Activated T-helper 2 cell treated with anti-CD3 and anti-CD28 coated beads, Interferon-gamma antibody, Interleukin-2, Interleukin-4, amounts not matched to agents 10 μg/mL and 5 μg/mL and 100 μg/mL, durations not matched to agents 14 hours and 24 hours and 36 hours (primary cell): ENCODE measurements at regions of chr10 and their contacts with region 1.

Region 1: GRCh38 chr10:102399217-102400089 is 3.9 kb downstream of the NFKB2 start:
- DNase-seq: peak; percentile 87
- H3K4me3 Mint-ChIP-seq: peak overlapping the region; percentile 91
- H3K27ac Mint-ChIP-seq: peak overlapping the region; percentile 69
- H3K4me1 Mint-ChIP-seq: peaks cover 23% of the 10 kb centered on the region
- H3K27me3 Mint-ChIP-seq: no peaks in the 10 kb centered on the region

Region 2: DNA sequence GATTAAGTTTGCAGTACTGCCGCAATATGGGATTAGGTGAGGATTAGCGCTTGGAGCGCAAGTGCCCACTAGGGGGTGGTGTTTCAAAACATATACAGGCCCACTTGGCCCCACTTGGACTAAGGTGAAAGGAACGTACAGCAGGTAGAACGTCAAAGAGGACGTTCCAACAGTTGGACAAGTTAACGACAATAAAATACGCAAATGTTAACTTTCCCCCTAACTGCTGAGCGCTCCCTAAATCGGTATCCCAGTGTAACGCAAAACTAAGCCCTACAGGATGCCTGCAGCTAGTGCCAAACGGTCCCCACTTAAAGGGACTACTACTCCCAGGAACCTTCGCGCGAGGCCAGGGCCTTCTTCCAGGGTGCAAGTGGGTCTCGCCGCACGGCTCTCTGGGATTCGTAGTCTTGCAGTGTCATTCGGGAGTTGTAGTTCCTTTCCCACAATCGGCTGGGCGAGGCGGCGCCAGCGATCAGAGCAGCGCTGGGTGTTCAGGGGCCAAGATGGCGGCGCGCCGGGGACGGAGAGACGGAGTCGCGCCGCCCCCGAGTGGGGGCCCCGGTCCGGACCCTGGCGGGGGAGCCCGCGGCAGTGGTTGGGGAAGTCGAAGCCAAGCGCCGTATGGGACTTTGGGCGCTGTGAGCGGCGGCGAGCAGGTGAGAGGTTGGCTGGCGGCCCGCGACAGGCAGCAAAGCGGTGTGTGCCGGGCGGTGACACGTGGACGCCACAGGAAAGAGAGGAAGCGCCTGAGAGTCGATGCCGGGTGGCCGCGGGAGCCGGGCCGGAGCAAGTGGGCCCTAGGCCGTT is 266.7 kb before region 1 on chr10 and contains the start of gene PPRC1:
- intact Hi-C with region 1: loop called (anchors 5 kb)
- DNase-seq: peak; percentile 98
- H3K4me3 Mint-ChIP-seq: peak within 1 kb of the TSS; percentile 95
- H3K27ac Mint-ChIP-seq: peak within 1 kb of the TSS; percentile 98
- H3K4me1 Mint-ChIP-seq: peaks cover 26% of the 10 kb centered on the region
- H3K27me3 Mint-ChIP-seq: no peaks in the 10 kb centered on the region
- total RNA-seq, gene PPRC1: 91.3 and 94.1 TPM in 2 replicates

Region 3: DNA sequence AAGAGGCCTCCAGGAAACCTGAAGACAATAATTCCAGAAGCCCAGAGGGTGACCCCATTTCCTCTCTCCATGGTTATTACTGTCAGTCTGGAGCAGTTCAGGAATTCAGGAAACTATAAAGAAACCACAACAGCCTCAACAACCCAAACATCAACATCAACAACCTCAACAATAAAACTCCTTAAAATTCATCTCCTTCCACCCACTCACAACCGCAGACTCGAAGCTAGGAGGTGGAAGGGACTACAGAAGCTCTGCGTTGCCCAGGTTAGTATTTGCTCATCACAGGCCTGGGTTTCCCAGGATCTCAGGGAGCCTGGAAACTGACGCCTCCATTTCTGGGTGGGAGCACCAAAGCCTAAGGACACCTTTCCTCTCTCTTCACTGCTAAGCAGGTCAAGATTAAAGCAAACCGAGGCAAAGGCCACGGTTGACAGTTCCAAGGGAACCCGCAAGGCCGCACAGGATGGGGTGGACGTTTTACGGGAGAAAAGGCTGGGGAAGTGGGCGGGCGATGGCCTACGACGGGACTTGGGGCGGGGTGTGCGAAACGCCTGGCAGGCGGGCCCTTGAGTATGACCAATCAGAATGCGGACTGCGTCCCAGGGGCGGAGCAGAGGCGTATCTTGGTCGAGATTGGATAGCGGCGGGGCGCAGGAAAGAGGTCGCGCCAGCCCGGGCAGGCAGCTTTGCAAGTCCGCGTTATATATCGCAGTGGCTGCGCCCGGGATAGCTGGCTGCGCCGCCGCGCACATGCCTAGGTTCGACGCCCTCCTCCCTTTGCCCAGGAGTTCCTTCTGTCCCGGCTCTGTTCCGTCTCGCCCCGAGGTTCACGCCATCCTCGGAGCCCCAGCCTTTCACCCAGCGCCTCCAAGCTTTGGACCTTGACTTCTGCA is 173.6 kb before region 1 on chr10 and contains the start of gene ELOVL3:
- intact Hi-C with region 1: loop called (anchors 1 kb)
- DNase-seq: peak; percentile 86
- H3K4me3 Mint-ChIP-seq: peak within 1 kb of the TSS; percentile 59
- H3K27ac Mint-ChIP-seq: no peak within 1 kb of the TSS
- H3K4me1 Mint-ChIP-seq: peaks cover 23% of the 10 kb centered on the region
- H3K27me3 Mint-ChIP-seq: peaks cover 47% of the 10 kb centered on the region
- total RNA-seq, gene ELOVL3: not detected in 2 replicates

Region 4: DNA sequence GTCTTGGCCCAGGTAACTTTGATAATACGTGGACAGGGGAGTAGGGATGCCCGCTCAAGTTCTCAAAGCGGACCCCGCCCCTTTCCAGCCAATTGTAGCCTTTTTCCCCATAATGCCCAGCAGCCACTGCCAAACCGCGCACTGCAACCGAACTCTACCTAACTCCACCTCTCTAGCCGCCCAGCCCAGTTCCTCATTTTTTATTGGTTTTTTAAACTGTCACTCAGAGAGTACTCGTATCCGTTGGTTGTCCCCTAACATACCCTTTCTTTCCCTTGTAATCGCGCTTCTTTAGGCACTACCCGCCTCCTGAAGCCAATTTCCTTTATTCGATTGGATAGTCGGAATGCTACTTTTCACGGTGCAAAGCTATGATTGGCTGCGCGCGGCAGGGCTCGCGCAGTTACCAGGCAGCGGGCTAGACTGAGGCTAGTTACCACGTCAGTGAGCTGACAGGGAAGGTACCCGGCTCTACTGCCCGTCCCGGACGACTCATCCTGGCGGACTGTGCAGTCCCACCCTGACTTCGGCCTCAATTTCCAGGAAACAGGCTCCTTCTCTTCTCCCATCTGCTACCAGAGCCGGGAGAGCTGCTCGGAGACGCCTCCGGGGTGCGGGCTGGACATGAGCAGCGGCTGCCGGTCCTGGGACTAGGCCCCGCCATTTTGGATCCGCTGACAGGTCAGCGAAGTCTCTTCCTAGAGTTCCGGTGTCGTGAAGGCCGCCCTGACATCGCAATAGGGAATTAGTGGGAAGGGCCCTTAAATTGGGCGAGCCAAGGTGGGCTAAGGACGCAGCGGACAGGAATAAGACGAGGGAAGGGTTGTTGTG is 154.1 kb before region 1 on chr10 and contains the start of gene GBF1:
- intact Hi-C with region 1: loop called (anchors 5 kb)
- DNase-seq: peak; percentile 92
- H3K4me3 Mint-ChIP-seq: peak within 1 kb of the TSS; percentile 99
- H3K27ac Mint-ChIP-seq: peak within 1 kb of the TSS; percentile 92
- H3K4me1 Mint-ChIP-seq: peaks cover 39% of the 10 kb centered on the region
- H3K27me3 Mint-ChIP-seq: peaks cover 14% of the 10 kb centered on the region
- total RNA-seq, gene GBF1: 47.9 and 49.2 TPM in 2 replicates

Region 5: GRCh38 chr10:102450194-102450938 is 50.9 kb after region 1 on chr10:
- intact Hi-C with region 1: loop called (anchors 1 kb)
- DNase-seq: peak; percentile 88
- H3K4me3 Mint-ChIP-seq: peak overlapping the region; percentile 94
- H3K27ac Mint-ChIP-seq: peak overlapping the region; percentile 87
- H3K4me1 Mint-ChIP-seq: peaks cover 23% of the 10 kb centered on the region
- H3K27me3 Mint-ChIP-seq: no peaks in the 10 kb centered on the region